Activated CD8-positive, alpha-beta memory T cell treated with anti-CD3 and anti-CD28 coated beads, Interleukin-2, amount 10 ng/mL, durations not matched to agents 7 days and 5 days (primary cell): ENCODE measurements at regions of chr3 and their contacts with region 1.

Region 1: DNA sequence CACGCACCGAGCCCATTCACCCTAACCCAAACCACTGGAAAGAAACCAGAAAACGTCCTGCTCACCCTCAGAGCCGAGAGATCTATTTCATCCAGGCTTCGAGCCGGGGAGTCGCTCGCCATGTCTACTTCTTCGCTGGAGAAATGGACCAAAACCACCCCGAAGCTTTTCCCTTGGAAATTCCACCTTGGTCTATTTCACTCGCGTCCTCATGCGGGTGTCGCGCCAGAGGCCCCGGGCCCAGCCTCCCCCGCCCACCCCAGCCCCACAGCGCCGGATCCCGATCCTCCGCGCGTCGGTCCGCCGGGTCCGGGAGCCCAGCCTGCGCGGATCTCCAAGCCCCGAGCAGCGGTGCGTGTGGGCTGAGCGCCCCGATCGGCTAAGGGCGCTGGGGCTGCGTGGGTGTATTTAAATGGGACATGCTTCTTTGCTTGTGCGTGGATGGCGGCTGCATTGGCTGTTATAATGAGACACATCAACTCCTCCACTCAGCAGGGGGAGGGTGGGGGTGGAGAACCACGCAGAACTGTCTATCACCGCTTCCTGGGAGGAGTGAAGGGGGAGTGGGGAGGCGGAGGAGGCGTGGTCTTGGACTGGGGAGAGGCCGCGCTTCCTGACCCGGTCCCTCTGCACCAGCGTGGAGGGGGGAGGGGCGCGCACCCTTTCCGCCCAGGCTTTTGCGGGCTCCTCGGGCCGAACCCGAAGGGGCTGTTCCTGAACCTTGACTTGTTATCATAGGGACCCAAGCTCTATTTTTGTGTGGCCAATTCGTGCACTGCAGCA is at the start of gene TNIK:
- DNase-seq: peak; percentile 96
- ATAC-seq: peak; percentile 86
- H3K4me3 Mint-ChIP-seq: peak within 1 kb of the TSS; percentile 96
- H3K27ac Mint-ChIP-seq: peak within 1 kb of the TSS; percentile 93
- H3K4me1 Mint-ChIP-seq: peaks cover 40% of the 10 kb centered on the region
- H3K27me3 Mint-ChIP-seq: no peaks in the 10 kb centered on the region
- total RNA-seq, gene TNIK: 36.6 to 39.3 TPM

Region 2: GRCh38 chr3:171187706-171188290 is 272.3 kb before region 1 on chr3:
- CTCF ChIA-PET with region 1: interaction called, 11 read pairs
- DNase-seq: no peak
- ATAC-seq: peak; percentile 40
- H3K4me3 Mint-ChIP-seq: no peak overlapping the region
- H3K27ac Mint-ChIP-seq: no peak overlapping the region
- H3K4me1 Mint-ChIP-seq: peaks cover 54% of the 10 kb centered on the region
- H3K27me3 Mint-ChIP-seq: no peaks in the 10 kb centered on the region

Region 3: GRCh38 chr3:171606151-171606751 is 146.1 kb after region 1 on chr3:
- CTCF ChIA-PET with region 1: no interaction called
- DNase-seq: no peak
- ATAC-seq: no peak
- H3K4me3 Mint-ChIP-seq: no peak overlapping the region
- H3K27ac Mint-ChIP-seq: no peak overlapping the region
- H3K4me1 Mint-ChIP-seq: no peaks in the 10 kb centered on the region
- H3K27me3 Mint-ChIP-seq: peaks cover 11% of the 10 kb centered on the region

Region 4: DNA sequence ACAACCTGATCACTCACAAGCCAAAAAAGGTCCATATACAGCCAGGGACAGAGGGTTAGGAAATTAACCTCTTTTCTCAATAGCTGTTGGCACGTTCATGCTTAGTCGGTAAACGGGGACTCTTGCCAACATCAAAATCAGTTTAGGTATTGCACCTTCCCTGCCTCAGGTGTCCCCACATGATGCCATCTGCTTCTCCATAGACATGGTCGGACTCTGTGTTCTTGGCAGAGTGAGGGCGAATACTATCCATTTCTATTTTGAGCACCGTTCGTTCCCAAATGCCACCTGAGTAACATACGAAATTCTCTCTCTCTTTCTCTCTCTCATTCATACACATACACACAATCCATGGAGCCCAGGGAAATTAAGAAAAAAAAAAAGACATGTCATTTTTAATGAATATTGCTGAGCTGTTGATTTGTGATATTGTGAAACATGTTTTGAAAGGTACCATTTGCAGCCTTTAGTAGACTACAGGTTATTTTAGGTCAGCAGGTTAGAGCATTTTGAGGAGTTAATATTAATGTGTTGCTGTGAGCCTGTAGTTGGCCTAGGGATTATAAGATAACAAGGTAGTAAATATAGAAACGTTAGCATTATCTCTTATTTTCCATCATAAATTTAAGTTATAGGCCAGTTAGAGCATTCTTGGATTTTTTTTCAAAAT is 909.6 kb after region 1 on chr3:
- CTCF ChIA-PET with region 1: no interaction called
- DNase-seq: no peak
- ATAC-seq: no peak
- H3K4me3 Mint-ChIP-seq: no peak overlapping the region
- H3K27ac Mint-ChIP-seq: no peak overlapping the region
- H3K4me1 Mint-ChIP-seq: no peaks in the 10 kb centered on the region
- H3K27me3 Mint-ChIP-seq: no peaks in the 10 kb centered on the region